ENCODE measurements at regions of chr5 and their contacts with region 1.

Region 1: DNA sequence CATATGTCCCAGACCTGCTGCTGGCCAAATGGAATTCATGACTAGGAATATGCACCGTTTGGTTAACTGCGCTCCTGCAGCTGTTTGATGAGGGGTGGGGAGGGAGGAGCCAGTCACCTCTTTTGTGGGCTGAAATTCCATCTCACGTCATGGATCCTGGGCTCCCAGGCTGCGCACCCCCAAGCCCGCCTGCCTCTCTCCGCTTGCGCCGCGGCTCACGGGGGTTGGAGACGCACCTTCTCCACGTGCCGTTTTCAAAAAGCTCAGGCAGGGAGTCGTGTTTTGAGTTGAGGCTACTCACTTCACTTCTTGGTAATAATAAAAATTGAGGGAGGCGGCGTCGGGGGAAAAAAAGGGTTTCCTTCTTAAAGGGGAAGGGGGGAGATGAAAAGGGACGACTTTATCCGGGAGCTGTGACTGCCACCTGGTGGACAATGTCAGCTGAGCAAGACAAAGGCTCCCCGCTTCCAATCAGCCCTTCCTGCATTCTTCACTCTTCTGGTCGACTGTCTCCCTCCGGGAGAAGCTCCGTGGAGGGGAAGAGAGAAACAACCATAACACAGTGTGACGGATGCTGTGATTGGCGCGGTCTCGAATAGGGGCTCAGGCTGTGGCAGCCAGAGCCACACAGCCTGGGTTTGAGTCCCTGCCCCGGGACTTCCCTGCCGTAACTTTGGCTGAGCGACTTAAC is 15.9 kb upstream of the C5orf47 start:
- DNase-seq: peak; percentile 82
- H3K4me3 ChIP-seq: peak overlapping the region; percentile 36 to 59 (median 52)
- H3K27ac ChIP-seq: no peak overlapping the region
- H3K4me1 ChIP-seq: peaks cover 6% of the 10 kb centered on the region
- H3K27me3 ChIP-seq: peaks cover 0 to 2% of the 10 kb centered on the region in 2 experiments
- CTCF ChIP-seq: peak; percentile 83 to 87
- POLR2A ChIP-seq: no peak

Region 2: GRCh38 chr5:173293817-173294672 is 679.0 kb before region 1 on chr5:
- CTCF ChIA-PET with region 1: interaction called, 3 read pairs
- POLR2A ChIA-PET with region 1: no interaction called
- dilution Hi-C with region 1: no loop called
- intact Hi-C with region 1: loop called (anchors 1 kb)
- DNase-seq: peak; percentile 75
- H3K4me3 ChIP-seq: no peak overlapping the region
- H3K27ac ChIP-seq: no peak overlapping the region
- H3K4me1 ChIP-seq: peaks cover 22% of the 10 kb centered on the region
- H3K27me3 ChIP-seq: no peaks in the 10 kb centered on the region
- CTCF ChIP-seq: peak; percentile 77 to 85
- POLR2A ChIP-seq: no peak

Region 3: DNA sequence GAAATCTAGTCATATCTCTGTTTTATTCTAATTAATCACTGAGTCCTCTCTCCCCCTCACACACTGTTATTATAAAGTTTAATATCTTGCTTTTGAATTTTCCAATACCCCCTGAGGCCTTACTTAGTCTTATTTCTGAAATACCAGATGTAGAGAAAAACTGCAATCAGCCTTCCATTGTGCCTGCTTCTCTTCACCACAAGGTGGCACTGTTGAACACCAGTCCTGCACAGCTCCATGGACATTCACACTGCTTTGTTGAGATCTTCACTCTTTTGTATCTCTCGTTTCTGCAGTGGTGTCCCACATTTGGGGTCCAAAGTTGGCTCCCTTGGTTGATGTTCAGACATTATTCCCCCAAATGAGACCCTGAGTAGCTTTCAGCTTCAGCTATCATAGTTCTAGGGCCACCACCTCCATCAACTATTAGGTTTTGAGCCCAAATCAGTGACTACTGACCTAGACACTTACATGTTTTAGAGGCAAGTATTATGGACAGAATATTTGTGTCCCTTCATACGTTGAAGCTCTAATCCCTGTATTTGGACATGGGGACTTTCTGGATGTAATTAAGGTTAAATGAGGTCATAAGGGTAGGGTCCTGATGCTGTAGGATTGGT is 380.9 kb before region 1 on chr5:
- CTCF ChIA-PET with region 1: interaction called, 4 read pairs
- POLR2A ChIA-PET with region 1: no interaction called
- dilution Hi-C with region 1: no loop called
- intact Hi-C with region 1: loop called (anchors 1 kb)
- DNase-seq: no peak
- H3K4me3 ChIP-seq: no peak overlapping the region
- H3K27ac ChIP-seq: no peak overlapping the region
- H3K4me1 ChIP-seq: no peaks in the 10 kb centered on the region
- H3K27me3 ChIP-seq: no peaks in the 10 kb centered on the region
- CTCF ChIP-seq: peak; percentile 36 to 54
- POLR2A ChIP-seq: no peak

Region 4: GRCh38 chr5:173764321-173765029 is 208.6 kb before region 1 on chr5:
- CTCF ChIA-PET with region 1: interaction called, 8 read pairs
- POLR2A ChIA-PET with region 1: no interaction called
- dilution Hi-C with region 1: no loop called
- intact Hi-C with region 1: loop called (anchors 1 kb)
- DNase-seq: peak; percentile 92
- H3K4me3 ChIP-seq: peak overlapping the region in 1 of 3 experiments; percentile 20
- H3K27ac ChIP-seq: peak overlapping the region; percentile 91
- H3K4me1 ChIP-seq: peaks cover 27% of the 10 kb centered on the region
- H3K27me3 ChIP-seq: no peaks in the 10 kb centered on the region
- CTCF ChIP-seq: no peak
- POLR2A ChIP-seq: no peak

Region 5: GRCh38 chr5:173887610-173888472 is 85.2 kb before region 1 on chr5 and contains the start of gene CPEB4:
- CTCF ChIA-PET with region 1: interaction called, 23 read pairs
- POLR2A ChIA-PET with region 1: interaction called, 4 read pairs
- dilution Hi-C with region 1: no loop called
- intact Hi-C with region 1: loop called (anchors 1 kb)
- DNase-seq: peak; percentile 99
- H3K4me3 ChIP-seq: peak within 1 kb of the TSS; percentile 76 to 84 (median 79)
- H3K27ac ChIP-seq: peak within 1 kb of the TSS; percentile 82
- H3K4me1 ChIP-seq: peaks cover 42% of the 10 kb centered on the region
- H3K27me3 ChIP-seq: no peaks in the 10 kb centered on the region
- CTCF ChIP-seq: no peak
- POLR2A ChIP-seq: peak; percentile 89
- total RNA-seq, gene CPEB4: 16.4 and 18.1 TPM in 2 replicates

Region 6: GRCh38 chr5:173925448-173926071 is 47.5 kb before region 1 on chr5:
- CTCF ChIA-PET with region 1: interaction called, 27 read pairs
- POLR2A ChIA-PET with region 1: no interaction called
- dilution Hi-C with region 1: no loop called
- intact Hi-C with region 1: no loop called
- DNase-seq: peak; percentile 70
- H3K4me3 ChIP-seq: no peak overlapping the region
- H3K27ac ChIP-seq: no peak overlapping the region
- H3K4me1 ChIP-seq: peaks cover 15% of the 10 kb centered on the region
- H3K27me3 ChIP-seq: no peaks in the 10 kb centered on the region
- CTCF ChIP-seq: peak; percentile 48 to 57
- POLR2A ChIP-seq: no peak

Region 7: GRCh38 chr5:174317259-174317894 is 344.3 kb after region 1 on chr5:
- CTCF ChIA-PET with region 1: interaction called, 20 read pairs
- POLR2A ChIA-PET with region 1: no interaction called
- dilution Hi-C with region 1: no loop called
- intact Hi-C with region 1: loop called (anchors 1 kb)
- DNase-seq: no peak
- H3K4me3 ChIP-seq: no peak overlapping the region
- H3K27ac ChIP-seq: no peak overlapping the region
- H3K4me1 ChIP-seq: no peaks in the 10 kb centered on the region
- H3K27me3 ChIP-seq: no peaks in the 10 kb centered on the region
- CTCF ChIP-seq: peak; percentile 36 to 57
- POLR2A ChIP-seq: no peak

Region 8: GRCh38 chr5:174760721-174761120 is 787.7 kb after region 1 on chr5:
- CTCF ChIA-PET with region 1: no interaction called
- POLR2A ChIA-PET with region 1: no interaction called
- dilution Hi-C with region 1: no loop called
- intact Hi-C with region 1: no loop called
- DNase-seq: no peak
- H3K4me3 ChIP-seq: no peak overlapping the region
- H3K27ac ChIP-seq: no peak overlapping the region
- H3K4me1 ChIP-seq: no peaks in the 10 kb centered on the region
- H3K27me3 ChIP-seq: no peaks in the 10 kb centered on the region
- CTCF ChIP-seq: no peak
- POLR2A ChIP-seq: no peak

Measured in endothelial cell of umbilical vein (primary cell).